Common myeloid progenitor, CD34-positive (primary cell): ENCODE measurements at regions of chr1 and their contacts with region 1.

Region 1: DNA sequence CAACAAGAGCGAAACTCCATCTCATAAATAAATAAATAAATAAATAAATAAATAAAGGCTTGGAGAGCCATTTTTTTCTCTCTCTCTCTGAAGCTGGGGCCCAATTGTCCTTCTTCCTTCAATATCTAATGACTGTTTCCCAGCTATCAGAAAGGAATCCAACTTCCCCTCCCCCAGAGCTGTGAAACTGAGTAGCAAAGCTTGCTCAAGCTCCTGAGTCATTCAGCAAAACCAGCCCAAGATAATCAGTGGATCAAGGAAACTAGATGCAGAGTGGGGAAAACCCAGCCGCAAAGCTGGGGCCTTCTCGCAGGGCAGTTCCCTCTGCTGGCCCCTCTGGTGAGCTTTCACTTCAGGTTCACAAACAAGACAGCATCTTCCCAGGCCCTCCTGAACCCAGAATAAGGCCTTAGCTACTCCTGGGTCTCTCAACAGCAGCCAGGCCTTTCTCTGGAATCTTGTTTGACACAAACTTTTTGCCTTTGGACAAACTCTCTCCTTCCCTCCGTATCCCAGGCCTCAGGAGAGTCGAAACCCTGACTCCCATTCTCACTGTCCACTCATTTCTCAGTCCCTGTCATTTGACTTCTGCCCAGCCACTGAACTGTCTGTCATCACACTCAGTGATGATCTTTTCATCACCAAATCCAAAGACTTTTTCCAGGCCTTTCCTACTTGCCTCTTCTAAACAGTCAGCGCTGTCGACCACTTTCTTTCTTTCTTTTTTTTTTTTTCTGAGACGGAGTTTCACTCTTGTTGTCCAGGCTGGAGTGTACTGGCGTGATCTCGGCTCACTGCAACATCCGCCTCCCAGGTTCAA is 18.0 kb upstream of the PTP4A2 start:
- DNase-seq: peak; percentile 95 to 98 (median 98)
- H3K4me3 ChIP-seq: peak overlapping the region in 5 of 7 experiments; percentile 3 to 43 (median 20)
- H3K27ac ChIP-seq: peak overlapping the region; percentile 81 to 92
- H3K4me1 ChIP-seq: peaks cover 17 to 61% (median 48%) of the 10 kb centered on the region in 4 experiments
- H3K27me3 ChIP-seq: no peaks in the 10 kb centered on the region

Region 2: GRCh38 chr1:31938174-31938950 is 17.8 kb before region 1 on chr1 and contains the start of gene PTP4A2:
- CTCF ChIA-PET with region 1: interaction called, 444 read pairs
- POLR2A ChIA-PET with region 1: interaction called, 11 read pairs
- DNase-seq: peak; percentile 88 to 93 (median 91)
- H3K4me3 ChIP-seq: peak within 1 kb of the TSS; percentile 67 to 99 (median 86)
- H3K27ac ChIP-seq: peak within 1 kb of the TSS; percentile 81 to 92
- H3K4me1 ChIP-seq: peaks cover 29 to 80% (median 60%) of the 10 kb centered on the region in 4 experiments
- H3K27me3 ChIP-seq: no peaks in the 10 kb centered on the region